AG04449 (cell line): ENCODE measurements at regions of chr6 and their contacts with region 1.

Region 1: GRCh38 chr6:153032255-153032882 is 29.9 kb upstream of the MTRF1L start:
- DNase-seq: no peak
- H3K4me3 ChIP-seq: no peak overlapping the region
- CTCF ChIP-seq: no peak

Region 2: GRCh38 chr6:153108315-153108714 is 75.9 kb after region 1 on chr6:
- CTCF ChIA-PET with region 1: interaction called, 69 read pairs
- POLR2A ChIA-PET with region 1: no interaction called
- DNase-seq: no peak
- H3K4me3 ChIP-seq: no peak overlapping the region
- CTCF ChIP-seq: peak; percentile 39

Region 3: DNA sequence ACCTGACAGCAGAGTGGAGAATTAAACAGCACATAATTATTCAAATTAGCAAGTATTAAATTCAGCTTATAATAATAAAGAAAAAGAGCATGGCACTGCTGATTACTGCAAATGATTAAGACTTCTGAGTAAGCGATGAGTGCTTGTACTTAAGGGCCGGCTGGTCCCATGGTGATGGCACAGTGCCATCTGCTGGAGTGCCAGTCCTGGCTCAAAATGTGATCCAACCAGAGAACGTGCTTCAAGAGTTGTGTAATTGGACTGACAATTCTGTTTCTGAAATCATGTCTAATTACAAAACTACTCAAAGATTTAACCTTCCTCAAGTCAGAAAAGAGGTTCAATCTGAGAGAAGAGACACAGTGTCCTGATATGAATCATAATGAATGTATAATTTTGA is 280.3 kb after region 1 on chr6:
- CTCF ChIA-PET with region 1: interaction called, 10 read pairs
- POLR2A ChIA-PET with region 1: no interaction called
- DNase-seq: no peak
- H3K4me3 ChIP-seq: no peak overlapping the region
- CTCF ChIP-seq: peak; percentile 37

Region 4: DNA sequence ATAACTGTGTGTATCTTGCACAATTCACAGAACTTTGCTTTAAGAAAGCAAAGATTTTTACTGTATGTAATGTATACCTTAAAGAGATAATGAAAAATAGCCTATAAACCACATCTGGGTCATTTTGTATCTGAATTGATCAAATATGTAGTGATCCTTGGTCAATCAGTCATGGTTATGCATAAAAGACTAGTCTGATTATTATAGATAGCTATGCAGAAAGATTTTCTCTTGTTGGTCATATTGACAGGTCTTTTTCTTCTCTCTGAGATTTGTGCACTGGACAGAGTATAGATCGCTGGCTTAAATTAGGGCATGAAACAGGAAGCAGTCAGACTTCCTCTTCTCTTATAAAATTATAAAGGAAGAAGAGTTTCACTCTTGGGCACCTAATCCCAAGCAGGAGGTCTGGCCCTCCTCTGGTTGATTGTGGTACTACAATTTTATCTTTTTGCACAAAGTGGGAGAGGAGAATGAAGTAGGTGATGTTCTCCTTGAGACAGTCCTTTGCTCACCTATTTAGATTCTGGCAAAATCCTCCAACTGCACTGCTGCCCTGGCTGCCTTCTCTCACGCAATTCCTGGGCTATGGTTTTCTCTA is 479.6 kb after region 1 on chr6:
- CTCF ChIA-PET with region 1: interaction called, 18 read pairs
- POLR2A ChIA-PET with region 1: no interaction called
- DNase-seq: no peak
- H3K4me3 ChIP-seq: no peak overlapping the region
- CTCF ChIP-seq: peak; percentile 46